ENCODE measurements at regions of chr14 and their contacts with region 1.

Region 1: GRCh38 chr14:20697273-20698017 is 8.9 kb downstream of the ANG start:
- DNase-seq: peak; percentile 51 to 55
- H3K4me3 ChIP-seq: no peak overlapping the region
- H3K27ac ChIP-seq: no peak overlapping the region
- H3K4me1 ChIP-seq: no peaks in the 10 kb centered on the region
- H3K27me3 ChIP-seq: no peaks in the 10 kb centered on the region
- CTCF ChIP-seq: peak; percentile 73

Region 2: DNA sequence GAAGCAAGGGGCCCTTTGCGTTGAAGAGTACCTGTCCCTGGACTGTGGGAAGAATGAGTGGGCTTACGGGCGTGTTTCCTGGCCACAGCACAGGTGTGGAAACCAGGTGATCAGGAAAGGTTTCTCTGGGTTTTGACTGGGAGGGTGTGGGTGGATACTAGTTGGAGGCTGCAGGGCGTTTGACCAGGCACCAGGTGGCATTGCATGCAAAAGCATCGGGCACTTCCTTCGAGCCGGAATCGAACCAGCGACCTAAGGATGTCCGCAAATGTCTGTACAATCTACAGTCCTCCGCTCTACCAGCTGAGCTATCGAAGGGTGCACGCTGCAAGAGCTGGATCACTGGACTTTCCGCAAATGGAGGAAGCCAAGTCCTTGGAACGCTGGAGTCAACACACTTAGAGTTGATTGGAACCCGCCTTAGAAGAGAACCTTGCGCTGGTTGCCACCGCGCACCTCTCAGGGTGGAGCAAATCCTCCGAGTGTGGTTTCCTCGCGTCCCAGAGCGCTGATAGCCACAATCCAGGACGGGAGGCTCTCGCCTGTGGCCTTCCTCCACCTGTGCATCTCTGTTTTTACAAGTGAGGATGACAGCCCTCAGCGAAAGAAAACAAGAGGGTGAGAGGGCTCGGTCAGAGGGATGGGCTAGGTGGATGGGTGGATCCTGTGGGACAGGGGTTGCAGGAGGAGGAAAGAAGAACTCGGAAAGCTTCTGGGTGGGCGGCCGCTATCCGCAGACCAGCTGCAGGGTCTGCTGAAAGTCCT is 34.3 kb before region 1 on chr14:
- CTCF ChIA-PET with region 1: no interaction called
- POLR2A ChIA-PET with region 1: no interaction called
- intact Hi-C with region 1: no loop called
- DNase-seq: peak; percentile 53 to 55
- H3K4me3 ChIP-seq: peak overlapping the region; percentile 54; the same call in 1 of the 2 replicates
- H3K27ac ChIP-seq: no peak overlapping the region
- H3K4me1 ChIP-seq: no peaks in the 10 kb centered on the region; the same call in 1 of the 2 replicates
- H3K27me3 ChIP-seq: no peaks in the 10 kb centered on the region
- CTCF ChIP-seq: peak; percentile 60

Region 3: DNA sequence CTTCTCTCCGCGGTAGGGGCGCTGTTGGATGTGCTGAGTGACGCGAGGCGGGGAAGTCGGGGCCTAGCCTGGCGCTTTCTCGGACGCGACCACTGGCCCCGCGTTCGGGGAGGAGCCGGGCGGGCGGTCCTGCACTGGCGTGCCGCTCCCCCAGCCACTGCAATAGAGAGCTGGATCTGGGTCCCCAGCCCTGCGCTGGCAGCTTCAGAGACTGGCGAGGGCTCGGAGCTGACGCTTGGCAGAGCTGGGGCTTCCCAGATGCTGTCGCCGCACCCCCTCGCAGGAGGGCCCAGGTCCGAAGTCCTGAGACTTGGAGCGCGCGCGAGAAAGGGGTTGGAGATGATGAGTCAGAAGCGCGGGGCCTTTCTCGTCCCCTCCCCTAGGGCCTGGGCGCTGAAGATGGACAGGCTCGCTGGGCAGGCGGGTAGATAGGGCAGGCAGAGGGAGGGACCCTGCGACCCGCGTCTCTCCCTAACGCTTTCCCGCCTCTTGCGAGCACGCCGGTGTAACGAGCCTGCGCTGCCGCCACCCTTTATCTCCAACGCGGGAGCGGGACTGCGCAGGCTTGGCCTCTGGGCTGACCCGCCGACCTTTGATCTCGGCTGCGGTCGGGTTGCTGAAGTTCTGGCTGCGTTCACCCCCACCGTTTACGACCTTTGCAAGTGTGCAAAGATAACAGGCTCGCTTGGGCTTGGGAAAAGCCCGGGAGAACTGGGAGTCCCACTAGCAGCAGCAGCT is 406.4 kb after region 1 on chr14:
- CTCF ChIA-PET with region 1: no interaction called
- POLR2A ChIA-PET with region 1: no interaction called
- intact Hi-C with region 1: loop called (anchors 5 kb)
- DNase-seq: peak; percentile 81 to 88
- H3K4me3 ChIP-seq: peak overlapping the region; percentile 70
- H3K27ac ChIP-seq: peak overlapping the region; percentile 89
- H3K4me1 ChIP-seq: peaks cover 54% of the 10 kb centered on the region
- H3K27me3 ChIP-seq: no peaks in the 10 kb centered on the region
- CTCF ChIP-seq: no peak